Thyroid gland (tissue), 4 donors: ENCODE measurements at regions of chr7 and their contacts with region 1.

Region 1: GRCh38 chr7:80659120-80660055 is 20.9 kb downstream of the CD36 start:
- DNase-seq: no peak
- H3K4me3 ChIP-seq: no peak overlapping the region
- H3K27ac ChIP-seq: no peak overlapping the region
- H3K4me1 ChIP-seq: peaks cover 7% of the 10 kb centered on the region in 2 donors
- H3K27me3 ChIP-seq: no peaks in the 10 kb centered on the region
- CTCF ChIP-seq: peak; percentile 31 to 83 (median 72)
- POLR2A ChIP-seq: no peak

Region 2: DNA sequence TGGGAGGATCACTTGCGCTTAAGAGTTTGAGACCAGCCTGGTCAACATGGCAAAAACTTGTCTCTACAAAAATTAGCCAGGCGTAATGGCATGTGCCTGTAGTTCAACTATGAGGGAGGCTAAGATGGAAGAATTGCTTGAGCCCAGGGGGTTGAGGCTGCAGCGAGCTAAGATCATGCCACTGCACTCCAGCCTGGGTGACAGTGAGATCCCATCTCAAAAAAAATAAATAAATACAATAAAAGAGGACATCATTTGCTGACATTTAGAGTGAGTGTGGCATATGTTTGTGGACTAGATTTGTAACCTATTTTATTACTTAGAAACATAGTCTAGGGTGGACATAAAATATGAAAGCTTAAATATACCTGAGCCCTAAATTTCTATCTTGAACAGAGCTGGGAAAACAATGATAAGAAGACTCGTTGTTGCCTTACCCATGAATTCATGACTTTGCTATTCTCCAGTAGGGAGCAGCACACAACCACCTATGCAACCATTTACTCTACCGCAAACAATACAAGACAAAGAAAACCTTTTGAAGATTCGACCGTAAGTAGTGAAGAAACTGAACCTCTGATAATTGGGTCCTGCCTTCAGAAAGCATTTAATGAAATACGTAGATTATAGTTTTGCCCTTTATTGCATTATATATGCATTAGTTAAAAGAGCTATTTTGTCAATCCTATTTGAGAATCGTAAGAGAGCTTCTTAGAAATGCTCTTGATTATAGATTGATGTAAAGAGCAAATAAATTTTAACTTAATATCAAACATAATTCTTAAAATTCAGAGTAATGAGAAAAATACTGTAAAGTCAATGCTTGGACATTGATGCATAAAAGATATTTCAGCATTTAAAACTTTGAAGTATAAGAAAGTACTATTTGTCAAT is 231.0 kb before region 1 on chr7:
- intact Hi-C with region 1: loop called (anchors 5 kb)
- DNase-seq: peak; percentile 15 to 42
- H3K4me3 ChIP-seq: no peak overlapping the region
- H3K27ac ChIP-seq: no peak overlapping the region
- H3K4me1 ChIP-seq: no peaks in the 10 kb centered on the region
- H3K27me3 ChIP-seq: no peaks in the 10 kb centered on the region
- CTCF ChIP-seq: peak in 4 of 6 experiments; percentile 61 to 88 (median 74)
- POLR2A ChIP-seq: no peak

Region 3: DNA sequence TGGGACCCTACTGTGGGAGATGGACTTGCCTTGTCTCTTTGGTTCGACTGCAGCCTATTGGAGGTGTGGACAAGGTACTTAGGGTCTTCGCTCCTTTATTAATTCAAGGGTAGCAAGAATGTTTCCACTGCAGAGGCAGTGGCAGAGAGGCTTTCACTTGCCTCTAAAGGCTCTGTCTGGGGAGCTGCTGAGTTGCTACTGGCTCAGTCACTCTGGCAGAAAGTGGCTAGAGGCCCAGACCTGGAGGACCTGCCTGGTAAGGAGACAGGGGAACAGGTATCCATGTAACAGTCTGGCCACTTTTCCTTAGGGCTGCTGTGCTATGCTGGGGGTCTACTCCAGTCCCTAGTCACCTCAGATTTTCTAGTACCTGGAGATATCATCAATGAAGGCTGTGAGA is 94.9 kb before region 1 on chr7:
- intact Hi-C with region 1: no loop called
- DNase-seq: no peak
- H3K4me3 ChIP-seq: no peak overlapping the region
- H3K27ac ChIP-seq: no peak overlapping the region
- H3K4me1 ChIP-seq: no peaks in the 10 kb centered on the region
- H3K27me3 ChIP-seq: no peaks in the 10 kb centered on the region
- CTCF ChIP-seq: no peak
- POLR2A ChIP-seq: no peak

Region 4: GRCh38 chr7:81267508-81267907 is 608.1 kb after region 1 on chr7:
- intact Hi-C with region 1: no loop called
- DNase-seq: no peak
- H3K4me3 ChIP-seq: no peak overlapping the region
- H3K27ac ChIP-seq: no peak overlapping the region
- H3K4me1 ChIP-seq: no peaks in the 10 kb centered on the region
- H3K27me3 ChIP-seq: no peaks in the 10 kb centered on the region
- CTCF ChIP-seq: no peak
- POLR2A ChIP-seq: no peak